ENCODE measurements at regions of chr9 and their contacts with region 1.

Region 1: GRCh38 chr9:34899535-34900158 is 58.4 kb upstream of the PHF24 start:
- DNase-seq: peak; percentile 60
- ATAC-seq: peak; percentile 100
- H3K4me3 ChIP-seq: no peak overlapping the region
- H3K27ac ChIP-seq: no peak overlapping the region
- H3K4me1 ChIP-seq: no peaks in the 10 kb centered on the region
- H3K27me3 ChIP-seq: peaks cover 26% of the 10 kb centered on the region
- CTCF ChIP-seq: peak; percentile 93

Region 2: DNA sequence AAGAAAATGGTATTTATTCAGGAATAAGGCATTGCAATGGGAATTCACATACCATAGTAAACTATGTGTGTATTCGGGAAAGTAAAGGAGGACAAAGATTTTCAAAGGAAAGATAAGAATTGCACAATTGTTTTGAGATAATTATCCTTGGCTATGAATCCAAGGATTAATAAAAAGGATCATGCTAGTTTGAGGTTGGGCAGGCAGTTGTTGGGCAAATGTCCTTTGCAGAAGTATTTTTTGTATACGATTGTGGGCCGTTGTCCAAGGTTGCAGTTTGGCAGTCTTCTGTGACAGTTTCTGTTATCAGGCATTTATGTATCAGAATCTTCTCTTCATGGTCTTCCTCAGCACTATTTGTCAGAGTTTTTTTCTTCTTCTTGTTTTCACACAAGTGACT is 840.4 kb before region 1 on chr9:
- CTCF ChIA-PET with region 1: no interaction called
- POLR2A ChIA-PET with region 1: no interaction called
- in situ Hi-C with region 1: no loop called
- intact Hi-C with region 1: no loop called
- DNase-seq: no peak
- ATAC-seq: no peak
- H3K4me3 ChIP-seq: no peak overlapping the region
- H3K27ac ChIP-seq: no peak overlapping the region
- H3K4me1 ChIP-seq: no peaks in the 10 kb centered on the region
- H3K27me3 ChIP-seq: no peaks in the 10 kb centered on the region
- CTCF ChIP-seq: no peak

Region 3: GRCh38 chr9:34759432-34760134 is 140.1 kb before region 1 on chr9:
- CTCF ChIA-PET with region 1: interaction called, 17 read pairs
- POLR2A ChIA-PET with region 1: interaction called, 4 read pairs
- in situ Hi-C with region 1: no loop called
- intact Hi-C with region 1: no loop called
- DNase-seq: no peak
- ATAC-seq: no peak
- H3K4me3 ChIP-seq: no peak overlapping the region
- H3K27ac ChIP-seq: no peak overlapping the region
- H3K4me1 ChIP-seq: no peaks in the 10 kb centered on the region
- H3K27me3 ChIP-seq: no peaks in the 10 kb centered on the region
- CTCF ChIP-seq: no peak

Region 4: GRCh38 chr9:34989003-34989945 is 89.6 kb after region 1 on chr9 and contains the start of gene DNAJB5:
- CTCF ChIA-PET with region 1: interaction called, 41 read pairs
- POLR2A ChIA-PET with region 1: interaction called, 6 read pairs
- in situ Hi-C with region 1: no loop called
- intact Hi-C with region 1: loop called (anchors 1 kb)
- DNase-seq: peak; percentile 95
- ATAC-seq: peak; percentile 94
- H3K4me3 ChIP-seq: peak within 1 kb of the TSS; percentile 76 to 78
- H3K27ac ChIP-seq: peak within 1 kb of the TSS; percentile 84
- H3K4me1 ChIP-seq: peaks cover 33% of the 10 kb centered on the region
- H3K27me3 ChIP-seq: no peaks in the 10 kb centered on the region
- CTCF ChIP-seq: no peak
- total RNA-seq, gene DNAJB5: 9.7 TPM

Region 5: GRCh38 chr9:34994260-34994899 is 94.7 kb after region 1 on chr9:
- CTCF ChIA-PET with region 1: interaction called, 41 read pairs
- POLR2A ChIA-PET with region 1: interaction called, 6 read pairs
- in situ Hi-C with region 1: no loop called
- intact Hi-C with region 1: no loop called
- DNase-seq: no peak
- ATAC-seq: peak; percentile 62
- H3K4me3 ChIP-seq: no peak overlapping the region
- H3K27ac ChIP-seq: no peak overlapping the region
- H3K4me1 ChIP-seq: peaks cover 44% of the 10 kb centered on the region
- H3K27me3 ChIP-seq: no peaks in the 10 kb centered on the region
- CTCF ChIP-seq: no peak

Region 6: GRCh38 chr9:35051069-35051967 is 151.7 kb after region 1 on chr9:
- CTCF ChIA-PET with region 1: interaction called, 9 read pairs
- POLR2A ChIA-PET with region 1: no interaction called
- in situ Hi-C with region 1: no loop called
- intact Hi-C with region 1: loop called (anchors 5 kb)
- DNase-seq: peak; percentile 25
- ATAC-seq: peak; percentile 75
- H3K4me3 ChIP-seq: no peak overlapping the region
- H3K27ac ChIP-seq: no peak overlapping the region
- H3K4me1 ChIP-seq: no peaks in the 10 kb centered on the region
- H3K27me3 ChIP-seq: no peaks in the 10 kb centered on the region
- CTCF ChIP-seq: peak; percentile 77

Region 7: DNA sequence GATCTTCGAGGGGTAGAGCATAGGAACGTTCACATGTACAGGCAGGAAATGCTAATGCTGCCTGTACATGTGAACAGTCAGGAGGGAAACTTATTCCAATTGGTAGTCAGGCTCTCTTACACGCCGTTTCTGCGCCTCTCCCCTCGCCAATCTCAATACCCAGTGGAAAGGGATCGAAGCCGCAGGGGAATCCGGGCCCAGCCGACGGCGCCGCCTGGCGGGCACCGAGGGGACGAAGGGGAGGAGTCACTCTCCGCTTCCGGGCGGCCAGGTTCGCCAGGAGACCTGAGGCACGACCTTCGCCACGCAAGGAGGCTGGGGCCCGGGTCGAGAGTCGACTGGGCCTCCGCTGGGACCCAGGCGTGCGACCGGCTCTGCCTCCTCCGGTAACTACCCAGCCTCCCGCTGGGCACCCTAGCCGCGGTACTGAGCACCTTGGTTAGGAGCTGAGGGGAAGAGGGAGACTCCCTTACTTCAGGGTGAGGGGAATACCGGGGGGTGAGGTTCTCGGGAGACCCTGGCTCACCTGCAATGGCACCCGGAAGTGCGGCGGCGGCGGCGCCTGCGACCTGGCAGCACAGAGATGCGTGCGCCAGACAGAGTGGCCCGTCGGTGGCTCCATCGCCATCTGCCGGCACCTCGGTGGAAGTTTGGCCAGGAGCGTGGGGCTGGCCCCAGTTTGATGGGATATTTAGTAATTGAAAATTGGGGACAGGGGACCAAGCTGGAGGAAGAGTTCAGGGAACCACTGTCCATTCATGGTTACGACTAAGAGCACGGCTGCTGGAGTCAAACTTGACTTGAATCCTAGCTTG is 196.6 kb after region 1 on chr9 and contains the start of gene PIGO:
- CTCF ChIA-PET with region 1: no interaction called
- POLR2A ChIA-PET with region 1: no interaction called
- in situ Hi-C with region 1: no loop called
- intact Hi-C with region 1: loop called (anchors 1 kb)
- DNase-seq: no peak
- ATAC-seq: peak; percentile 96
- H3K4me3 ChIP-seq: peak within 1 kb of the TSS; percentile 78 to 91
- H3K27ac ChIP-seq: peak within 1 kb of the TSS; percentile 93
- H3K4me1 ChIP-seq: peaks cover 7% of the 10 kb centered on the region
- H3K27me3 ChIP-seq: no peaks in the 10 kb centered on the region
- CTCF ChIP-seq: no peak
- total RNA-seq, gene PIGO: 58.7 TPM

Region 8: GRCh38 chr9:35203528-35203927 is 303.9 kb after region 1 on chr9:
- CTCF ChIA-PET with region 1: interaction called, 10 read pairs
- POLR2A ChIA-PET with region 1: no interaction called
- in situ Hi-C with region 1: no loop called
- intact Hi-C with region 1: no loop called
- DNase-seq: no peak
- ATAC-seq: no peak
- H3K4me3 ChIP-seq: no peak overlapping the region
- H3K27ac ChIP-seq: no peak overlapping the region
- H3K4me1 ChIP-seq: no peaks in the 10 kb centered on the region
- H3K27me3 ChIP-seq: no peaks in the 10 kb centered on the region
- CTCF ChIP-seq: no peak